ENCODE measurements at regions of chr17 and their contacts with region 1.

Region 1: DNA sequence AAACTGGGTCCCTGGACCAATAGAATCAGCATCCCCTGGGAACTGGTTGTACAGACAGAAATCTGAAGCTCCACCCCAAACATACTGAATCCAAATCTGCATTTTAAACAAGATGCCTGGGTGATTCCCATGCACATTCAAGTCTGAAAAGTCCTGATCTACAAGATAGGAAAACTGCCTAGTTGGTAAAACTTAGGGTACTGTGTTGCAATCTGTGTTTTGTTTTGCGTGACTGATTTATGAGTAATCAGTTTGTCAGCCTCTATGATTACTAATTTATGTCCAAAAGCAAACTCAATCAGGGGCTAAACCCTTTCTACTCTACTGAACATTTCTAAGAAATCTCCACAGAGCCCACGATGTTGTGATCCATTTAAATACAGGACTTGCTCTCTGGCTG is 103.8 kb downstream of the YPEL2 start:
- DNase-seq: no peak
- ATAC-seq: no peak

Region 2: GRCh38 chr17:59372138-59372857 is 62.9 kb before region 1 on chr17:
- intact Hi-C with region 1: loop called (anchors 5 kb)
- DNase-seq: no peak
- ATAC-seq: peak; percentile 63

Region 3: GRCh38 chr17:59487161-59487873 is 52.1 kb after region 1 on chr17:
- intact Hi-C with region 1: no loop called
- DNase-seq: no peak
- ATAC-seq: no peak

Measured in Right ventricle myocardium superior (tissue), 1 donor.